ENCODE measurements at regions of chr19 and their contacts with region 1.

Region 1: DNA sequence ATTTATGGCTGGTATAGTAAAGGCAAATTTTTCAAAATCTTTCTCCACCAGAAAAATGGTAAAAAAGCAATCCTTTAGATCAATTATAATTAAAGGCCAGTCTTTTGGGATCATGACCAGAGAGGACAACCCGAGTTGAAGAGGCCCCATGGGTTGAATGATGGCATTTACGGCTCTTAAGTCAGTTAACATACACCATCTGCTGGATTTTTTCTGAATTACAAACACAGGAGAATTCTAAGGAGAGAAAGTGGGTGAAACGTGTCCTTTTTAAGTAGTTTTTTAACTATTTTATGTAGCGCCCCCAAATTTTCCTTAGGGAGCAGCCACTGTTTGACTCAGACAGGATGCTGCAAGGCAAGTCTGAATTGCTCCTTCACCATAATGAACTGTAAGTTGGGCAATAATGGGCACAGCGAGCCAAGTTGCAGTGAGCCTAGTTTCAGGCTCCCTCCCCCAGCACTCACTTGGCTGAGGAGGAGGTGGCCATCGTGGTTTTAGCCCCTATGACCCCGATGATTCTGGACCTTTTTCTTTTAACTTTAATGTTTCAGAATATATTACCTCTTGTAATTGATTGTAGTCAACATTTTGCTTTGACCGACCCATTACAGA is 13.6 kb upstream of the ZNF611 start:
- DNase-seq: no peak
- ATAC-seq: peak in 2 of 4 donors; percentile 46 to 56
- H3K4me3 ChIP-seq: peak overlapping the region in 1 of 12 donors; percentile 19
- H3K27ac ChIP-seq: no peak overlapping the region
- H3K4me1 ChIP-seq: peaks cover 0 to 4% (median 0%) of the 10 kb centered on the region in 12 donors
- H3K27me3 ChIP-seq: no peaks in the 10 kb centered on the region
- CTCF ChIP-seq: peak; percentile 23 to 67 (median 46)
- POLR2A ChIP-seq: no peak

Region 2: DNA sequence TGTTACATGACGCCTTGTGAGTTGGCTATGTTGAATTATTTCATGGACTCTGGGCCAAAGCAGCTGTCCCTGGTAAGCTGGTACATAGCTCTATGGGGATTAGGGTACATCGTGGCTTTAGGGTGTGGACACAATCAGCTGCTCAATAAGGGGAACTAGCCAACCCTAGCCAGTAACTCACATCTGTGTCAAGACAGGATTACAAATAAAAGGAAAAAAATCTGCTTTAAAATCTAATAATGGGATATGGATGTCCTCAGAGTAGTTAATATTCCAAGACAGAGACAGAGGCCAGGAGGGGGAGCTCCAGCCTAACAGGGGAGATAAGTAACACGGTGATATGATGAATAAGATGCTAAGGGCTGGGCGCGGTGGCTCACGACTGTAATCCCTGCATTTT is 500.2 kb before region 1 on chr19:
- intact Hi-C with region 1: loop called in 6 of 10 experiments (anchors 2 to 10 kb)
- DNase-seq: peak; percentile 35 to 64 (median 55)
- ATAC-seq: peak in 3 of 4 donors; percentile 66 to 80 (median 71)
- H3K4me3 ChIP-seq: no peak overlapping the region
- H3K27ac ChIP-seq: no peak overlapping the region
- H3K4me1 ChIP-seq: no peaks in the 10 kb centered on the region
- H3K27me3 ChIP-seq: no peaks in the 10 kb centered on the region
- CTCF ChIP-seq: peak; percentile 34 to 62 (median 44)
- POLR2A ChIP-seq: no peak

Region 3: GRCh38 chr19:52258426-52258825 is 490.0 kb before region 1 on chr19:
- intact Hi-C with region 1: loop called in 1 of 10 experiments (anchors 10 kb)
- DNase-seq: no peak
- ATAC-seq: no peak
- H3K4me3 ChIP-seq: no peak overlapping the region
- H3K27ac ChIP-seq: no peak overlapping the region
- H3K4me1 ChIP-seq: no peaks in the 10 kb centered on the region
- H3K27me3 ChIP-seq: no peaks in the 10 kb centered on the region
- CTCF ChIP-seq: no peak
- POLR2A ChIP-seq: no peak

Region 4: DNA sequence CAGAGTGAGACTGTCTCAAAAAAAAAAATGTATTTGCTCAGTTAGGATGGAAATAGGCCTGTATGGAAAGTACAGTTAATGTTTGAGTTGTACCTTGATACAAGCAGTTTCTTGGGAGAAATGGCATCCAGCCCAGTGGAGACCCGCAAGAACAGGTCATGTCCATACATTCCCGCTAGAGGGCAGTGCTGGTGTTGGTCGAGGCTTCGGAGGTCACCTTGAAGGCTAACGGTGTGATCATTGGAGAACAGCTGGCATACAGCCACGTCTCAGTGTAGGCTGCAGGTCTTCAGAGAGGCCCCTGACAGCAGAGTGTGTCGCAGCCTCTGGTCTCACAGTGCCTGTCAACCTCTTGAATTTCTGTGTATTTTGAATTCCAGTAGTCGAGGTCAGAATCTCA is 404.9 kb before region 1 on chr19:
- intact Hi-C with region 1: loop called in 4 of 10 experiments (anchors 5 to 10 kb)
- DNase-seq: peak in 4 of 5 donors; percentile 50 to 65 (median 61)
- ATAC-seq: peak in 3 of 4 donors; percentile 48 to 75 (median 75)
- H3K4me3 ChIP-seq: no peak overlapping the region
- H3K27ac ChIP-seq: peak overlapping the region in 1 of 12 donors; percentile 44
- H3K4me1 ChIP-seq: peaks cover 0 to 8% (median 0%) of the 10 kb centered on the region in 12 donors
- H3K27me3 ChIP-seq: no peaks in the 10 kb centered on the region
- CTCF ChIP-seq: peak; percentile 48 to 77 (median 62)
- POLR2A ChIP-seq: no peak